ENCODE measurements at regions of chr2 and their contacts with region 1.

Region 1: DNA sequence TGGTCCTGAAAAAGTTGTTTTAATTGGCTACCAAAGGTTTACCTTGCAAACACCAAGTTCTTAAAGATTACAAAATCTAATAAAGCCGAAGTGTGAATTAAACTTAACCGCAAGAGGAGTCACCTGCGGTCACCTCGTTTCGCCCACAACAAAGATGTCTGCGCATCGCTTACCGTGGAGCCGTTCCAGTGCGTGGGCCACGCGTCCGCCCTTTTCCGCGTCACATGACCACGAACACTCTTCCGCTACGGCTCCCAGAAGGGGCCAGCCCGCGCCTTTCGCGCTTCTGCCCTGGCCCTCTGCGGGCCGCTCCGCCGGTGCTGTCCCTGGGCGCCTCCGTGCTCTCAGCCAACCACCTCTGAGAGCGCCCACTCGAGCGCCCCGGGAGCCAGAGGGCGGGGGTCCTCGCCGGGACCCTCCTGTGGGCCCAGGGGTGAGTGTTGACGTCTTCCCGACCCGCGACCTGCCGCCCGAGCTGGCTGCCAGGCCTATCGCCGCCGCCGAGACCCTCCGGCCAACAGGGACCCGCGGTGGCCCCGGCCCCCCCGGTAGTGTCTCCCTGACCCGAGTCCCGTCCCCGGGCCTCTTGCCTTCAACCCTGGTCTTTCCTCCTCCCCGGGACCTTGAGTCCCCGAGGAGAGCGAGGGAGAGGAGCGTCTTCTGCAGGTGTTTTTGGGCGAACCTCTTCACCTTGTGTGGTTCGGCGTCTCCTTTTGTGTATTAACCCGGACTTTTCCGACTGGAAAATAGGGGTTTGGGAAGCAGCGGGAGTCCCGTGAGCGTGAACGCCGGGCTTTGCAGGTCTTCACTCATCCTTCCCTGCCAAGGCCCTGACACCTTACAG is at the start of gene MFF:
- DNase-seq: peak; percentile 98
- H3K4me3 Mint-ChIP-seq: peak within 1 kb of the TSS; percentile 90
- H3K27ac Mint-ChIP-seq: peak within 1 kb of the TSS; percentile 88
- H3K4me1 Mint-ChIP-seq: peaks cover 24% of the 10 kb centered on the region
- H3K27me3 Mint-ChIP-seq: peaks cover 6% of the 10 kb centered on the region
- total RNA-seq, gene MFF: 82.1 to 82.2 TPM

Region 2: GRCh38 chr2:226583715-226584114 is 741.5 kb before region 1 on chr2:
- CTCF ChIA-PET with region 1: no interaction called
- intact Hi-C with region 1: no loop called
- DNase-seq: no peak
- H3K4me3 Mint-ChIP-seq: no peak overlapping the region
- H3K27ac Mint-ChIP-seq: no peak overlapping the region
- H3K4me1 Mint-ChIP-seq: no peaks in the 10 kb centered on the region
- H3K27me3 Mint-ChIP-seq: peaks cover 23% of the 10 kb centered on the region

Region 3: DNA sequence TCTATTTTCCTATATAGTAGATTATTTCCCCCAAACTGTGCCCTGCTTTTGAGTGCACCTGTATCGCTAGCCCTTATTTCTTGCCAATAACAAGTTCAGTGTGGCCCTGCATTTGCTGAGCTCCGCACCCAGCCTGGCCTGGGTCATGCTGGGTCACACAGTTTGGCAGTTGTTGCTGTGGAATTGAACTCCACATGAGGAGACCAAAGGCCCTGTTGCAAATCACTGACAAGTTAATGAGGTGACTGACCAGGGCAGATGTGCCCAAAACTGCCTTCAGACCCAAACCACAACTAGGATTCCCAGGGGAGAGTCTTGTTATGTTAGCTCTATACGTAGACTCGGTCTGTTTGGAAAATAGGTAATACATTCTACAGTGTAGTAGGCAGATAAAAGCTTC is 192.2 kb before region 1 on chr2:
- CTCF ChIA-PET with region 1: no interaction called
- intact Hi-C with region 1: loop called (anchors 1 kb)
- DNase-seq: no peak
- H3K4me3 Mint-ChIP-seq: no peak overlapping the region
- H3K27ac Mint-ChIP-seq: no peak overlapping the region
- H3K4me1 Mint-ChIP-seq: no peaks in the 10 kb centered on the region
- H3K27me3 Mint-ChIP-seq: peaks cover 9% of the 10 kb centered on the region

Region 4: GRCh38 chr2:227280895-227281294 is 44.3 kb before region 1 on chr2:
- CTCF ChIA-PET with region 1: no interaction called
- intact Hi-C with region 1: no loop called
- DNase-seq: no peak
- H3K4me3 Mint-ChIP-seq: no peak overlapping the region
- H3K27ac Mint-ChIP-seq: no peak overlapping the region
- H3K4me1 Mint-ChIP-seq: no peaks in the 10 kb centered on the region
- H3K27me3 Mint-ChIP-seq: no peaks in the 10 kb centered on the region

Region 5: DNA sequence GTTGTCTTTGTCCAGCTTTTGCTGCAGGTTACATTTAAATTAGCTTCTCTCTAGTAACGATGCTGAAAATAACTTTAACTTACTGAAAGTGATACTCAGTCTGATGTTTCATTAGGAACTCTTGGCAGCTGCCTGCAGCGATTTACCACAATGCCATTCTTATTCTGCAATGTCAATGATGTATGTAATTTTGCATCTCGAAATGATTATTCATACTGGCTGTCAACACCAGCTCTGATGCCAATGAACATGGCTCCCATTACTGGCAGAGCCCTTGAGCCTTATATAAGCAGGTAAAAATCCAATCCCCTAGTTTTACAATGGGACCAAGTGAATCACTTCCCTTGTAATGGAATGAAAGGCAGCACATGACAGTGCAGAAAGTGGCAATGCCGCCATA is 16.4 kb before region 1 on chr2:
- CTCF ChIA-PET with region 1: no interaction called
- intact Hi-C with region 1: no loop called
- DNase-seq: no peak
- H3K4me3 Mint-ChIP-seq: no peak overlapping the region
- H3K27ac Mint-ChIP-seq: no peak overlapping the region
- H3K4me1 Mint-ChIP-seq: no peaks in the 10 kb centered on the region
- H3K27me3 Mint-ChIP-seq: no peaks in the 10 kb centered on the region

Region 6: GRCh38 chr2:227335713-227336112 is 10.5 kb after region 1 on chr2:
- CTCF ChIA-PET with region 1: interaction called, 3 read pairs
- intact Hi-C with region 1: loop called (anchors 1 kb)
- DNase-seq: no peak
- H3K4me3 Mint-ChIP-seq: no peak overlapping the region
- H3K27ac Mint-ChIP-seq: peak overlapping the region; percentile 54
- H3K4me1 Mint-ChIP-seq: peaks cover 21% of the 10 kb centered on the region
- H3K27me3 Mint-ChIP-seq: no peaks in the 10 kb centered on the region

Region 7: DNA sequence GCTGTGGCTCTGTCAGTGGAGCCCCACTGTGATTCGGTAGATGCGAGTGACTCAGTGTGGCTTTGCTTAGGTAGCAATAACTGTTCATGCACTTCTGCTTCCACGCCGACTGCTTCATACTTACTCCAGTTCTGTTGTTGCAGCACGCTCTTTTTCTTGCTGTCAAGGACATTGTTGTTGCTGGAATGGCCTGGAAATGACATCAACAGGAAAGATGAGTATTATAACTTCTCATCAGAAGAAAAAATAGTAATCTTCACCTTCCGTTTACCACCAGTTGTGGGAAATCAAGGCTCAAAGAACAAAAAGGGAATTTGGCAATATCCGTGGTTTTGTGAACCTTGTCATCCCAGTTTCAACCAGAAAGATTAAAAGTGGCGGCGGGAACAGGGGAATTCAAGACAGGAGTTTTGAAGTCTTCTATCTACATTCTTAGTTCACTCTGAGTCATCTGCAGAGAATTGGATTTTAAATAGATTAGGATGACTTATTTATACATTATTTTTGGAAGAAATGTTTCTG is 45.6 kb after region 1 on chr2:
- CTCF ChIA-PET with region 1: no interaction called
- intact Hi-C with region 1: loop called (anchors 1 kb)
- DNase-seq: peak; percentile 44
- H3K4me3 Mint-ChIP-seq: no peak overlapping the region
- H3K27ac Mint-ChIP-seq: peak overlapping the region; percentile 22
- H3K4me1 Mint-ChIP-seq: peaks cover 25% of the 10 kb centered on the region
- H3K27me3 Mint-ChIP-seq: no peaks in the 10 kb centered on the region